ENCODE measurements at regions of chr10 and their contacts with region 1.

Region 1: GRCh38 chr10:4131407-4132228 is 346.6 kb upstream of the KLF6 start:
- DNase-seq: peak; percentile 42
- H3K4me3 Mint-ChIP-seq: no peak overlapping the region
- H3K27ac Mint-ChIP-seq: no peak overlapping the region
- H3K4me1 Mint-ChIP-seq: peaks cover 39% of the 10 kb centered on the region
- H3K27me3 Mint-ChIP-seq: no peaks in the 10 kb centered on the region

Region 2: DNA sequence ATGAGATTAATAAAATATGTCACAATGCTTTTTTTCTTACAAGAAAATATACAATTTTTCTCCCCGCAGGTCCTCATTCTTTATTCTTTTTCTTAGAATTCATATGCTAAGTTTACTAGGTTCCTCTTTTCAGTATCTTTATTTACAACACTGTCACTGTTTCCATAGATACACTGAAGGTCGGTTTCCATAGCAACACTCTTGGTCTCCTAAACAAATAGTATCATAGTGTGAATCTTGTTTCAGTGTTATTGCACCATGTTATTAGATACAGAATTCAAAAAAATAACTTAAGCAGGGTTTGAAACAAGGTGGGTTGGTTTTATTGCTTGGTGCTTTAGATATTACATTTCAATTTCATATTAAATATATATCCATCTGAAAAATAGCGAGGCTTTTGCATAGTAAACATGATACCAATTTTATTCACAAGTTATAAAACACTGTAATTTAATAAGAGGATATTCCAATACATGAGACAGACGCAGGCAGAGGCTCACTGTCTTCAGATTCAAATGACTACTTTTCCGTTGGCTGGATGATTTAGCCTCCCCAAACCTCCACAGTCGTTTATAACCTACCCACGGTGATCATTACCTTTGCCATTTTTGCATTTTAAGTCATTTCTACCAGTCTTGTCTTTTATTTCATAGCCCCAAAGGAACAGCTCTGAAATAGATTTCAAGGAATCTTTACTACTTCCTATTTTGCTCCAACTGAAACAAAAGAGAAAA is 257.7 kb before region 1 on chr10:
- CTCF ChIA-PET with region 1: no interaction called
- POLR2A ChIA-PET with region 1: interaction called, 4 read pairs
- intact Hi-C with region 1: loop called (anchors 1 kb)
- DNase-seq: no peak
- H3K4me3 Mint-ChIP-seq: no peak overlapping the region
- H3K27ac Mint-ChIP-seq: peak overlapping the region; percentile 87
- H3K4me1 Mint-ChIP-seq: peaks cover 72% of the 10 kb centered on the region
- H3K27me3 Mint-ChIP-seq: no peaks in the 10 kb centered on the region

Region 3: GRCh38 chr10:3961082-3961481 is 170.5 kb before region 1 on chr10:
- CTCF ChIA-PET with region 1: no interaction called
- POLR2A ChIA-PET with region 1: no interaction called
- intact Hi-C with region 1: loop called (anchors 5 kb)
- DNase-seq: peak; percentile 70
- H3K4me3 Mint-ChIP-seq: no peak overlapping the region
- H3K27ac Mint-ChIP-seq: peak overlapping the region; percentile 58
- H3K4me1 Mint-ChIP-seq: peaks cover 37% of the 10 kb centered on the region
- H3K27me3 Mint-ChIP-seq: no peaks in the 10 kb centered on the region

Region 4: GRCh38 chr10:4073912-4074311 is 57.7 kb before region 1 on chr10:
- CTCF ChIA-PET with region 1: interaction called, 5 read pairs
- POLR2A ChIA-PET with region 1: interaction called, 3 read pairs
- intact Hi-C with region 1: loop called (anchors 2 kb)
- DNase-seq: no peak
- H3K4me3 Mint-ChIP-seq: no peak overlapping the region
- H3K27ac Mint-ChIP-seq: no peak overlapping the region
- H3K4me1 Mint-ChIP-seq: peaks cover 39% of the 10 kb centered on the region
- H3K27me3 Mint-ChIP-seq: no peaks in the 10 kb centered on the region

Region 5: DNA sequence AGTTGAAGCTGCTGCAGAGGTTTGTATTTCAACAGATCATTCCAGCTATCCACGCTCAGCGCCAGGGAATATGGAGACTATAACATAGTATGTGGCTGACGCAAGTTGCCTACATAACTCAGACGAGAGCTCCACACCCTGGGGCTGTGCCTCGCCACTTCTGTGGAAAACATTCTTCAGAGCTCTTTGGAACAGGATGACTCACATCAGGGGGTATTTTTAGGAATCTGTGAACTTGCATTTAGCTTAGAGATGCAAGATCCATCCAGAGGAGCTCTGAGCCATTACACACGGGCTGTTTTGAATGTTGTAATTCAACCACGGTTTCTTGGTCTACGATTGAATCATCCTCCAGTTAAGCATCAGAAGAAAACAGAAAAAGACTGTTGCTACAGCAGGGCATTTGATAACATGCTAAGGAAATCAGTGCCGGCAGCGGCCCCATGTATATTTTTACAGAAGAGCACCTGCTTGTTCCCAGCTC is 212.9 kb after region 1 on chr10:
- CTCF ChIA-PET with region 1: no interaction called
- POLR2A ChIA-PET with region 1: interaction called, 4 read pairs
- intact Hi-C with region 1: loop called (anchors 10 kb)
- DNase-seq: peak; percentile 70
- H3K4me3 Mint-ChIP-seq: no peak overlapping the region
- H3K27ac Mint-ChIP-seq: peak overlapping the region; percentile 30
- H3K4me1 Mint-ChIP-seq: peaks cover 23% of the 10 kb centered on the region
- H3K27me3 Mint-ChIP-seq: no peaks in the 10 kb centered on the region